GM12878 (cell line): ENCODE measurements at regions of chr6 and their contacts with region 1.

Region 1: GRCh38 chr6:152184917-152185574 is 377.6 kb downstream of the ESR1 start:
- DNase-seq: peak; percentile 32
- ATAC-seq: peak; percentile 83
- H3K4me3 ChIP-seq: peak overlapping the region; percentile 38; the same call in 1 of the 2 replicates
- H3K27ac ChIP-seq: peak overlapping the region; percentile 55
- H3K4me1 ChIP-seq: peaks cover 6% of the 10 kb centered on the region
- H3K27me3 ChIP-seq: no peaks in the 10 kb centered on the region
- CTCF ChIP-seq: no peak
- EP300 ChIP-seq: no peak
- POLR2A ChIP-seq: no peak
- RAD21 ChIP-seq: no peak

Region 2: DNA sequence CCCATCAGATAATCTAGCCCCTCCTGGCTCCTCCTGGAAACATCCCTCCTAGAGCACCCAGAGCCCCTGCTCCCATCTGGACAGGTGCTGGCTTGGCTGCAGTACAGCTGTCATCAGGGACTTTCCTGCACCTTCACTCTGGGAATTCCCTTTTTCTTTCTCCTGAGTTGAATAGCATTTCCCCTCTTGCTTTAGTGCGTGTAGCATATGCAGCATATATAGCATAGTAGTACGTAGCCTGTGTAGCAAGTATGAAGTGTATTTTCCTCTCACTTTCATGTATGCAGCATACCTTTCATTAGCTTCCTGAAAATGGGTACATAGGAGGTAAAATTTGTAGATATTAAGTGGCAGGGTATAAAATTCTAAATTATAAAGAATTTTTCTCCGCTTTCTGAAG is 24.7 kb before region 1 on chr6:
- CTCF ChIA-PET with region 1: interaction called, 3 read pairs
- POLR2A ChIA-PET with region 1: no interaction called
- RAD21 ChIA-PET with region 1: interaction called, 7 read pairs
- SMC1A ChIA-PET with region 1: interaction called, 18 read pairs
- in situ Hi-C with region 1: no loop called
- intact Hi-C with region 1: no loop called
- DNase-seq: peak; percentile 69
- ATAC-seq: peak; percentile 96
- H3K4me3 ChIP-seq: no peak overlapping the region
- H3K27ac ChIP-seq: no peak overlapping the region
- H3K4me1 ChIP-seq: peaks cover 7% of the 10 kb centered on the region; the same call in 1 of the 2 replicates
- H3K27me3 ChIP-seq: no peaks in the 10 kb centered on the region
- CTCF ChIP-seq: no peak
- EP300 ChIP-seq: peak; percentile 70 to 83; a peak in 2 of 4 replicates
- POLR2A ChIP-seq: no peak
- RAD21 ChIP-seq: no peak

Region 3: GRCh38 chr6:152170705-152171667 is 14.1 kb before region 1 on chr6:
- CTCF ChIA-PET with region 1: interaction called, 4 read pairs
- POLR2A ChIA-PET with region 1: interaction called, 3 read pairs
- RAD21 ChIA-PET with region 1: interaction called, 3 read pairs
- SMC1A ChIA-PET with region 1: interaction called, 11 read pairs
- in situ Hi-C with region 1: no loop called
- intact Hi-C with region 1: no loop called
- DNase-seq: peak; percentile 89
- ATAC-seq: peak; percentile 98
- H3K4me3 ChIP-seq: peak overlapping the region; percentile 39; the same call in 1 of the 2 replicates
- H3K27ac ChIP-seq: peak overlapping the region; percentile 80
- H3K4me1 ChIP-seq: peaks cover 13% of the 10 kb centered on the region; the same call in 1 of the 2 replicates
- H3K27me3 ChIP-seq: no peaks in the 10 kb centered on the region
- CTCF ChIP-seq: no peak
- EP300 ChIP-seq: peak; percentile 86 to 88
- POLR2A ChIP-seq: no peak
- RAD21 ChIP-seq: no peak

Region 4: DNA sequence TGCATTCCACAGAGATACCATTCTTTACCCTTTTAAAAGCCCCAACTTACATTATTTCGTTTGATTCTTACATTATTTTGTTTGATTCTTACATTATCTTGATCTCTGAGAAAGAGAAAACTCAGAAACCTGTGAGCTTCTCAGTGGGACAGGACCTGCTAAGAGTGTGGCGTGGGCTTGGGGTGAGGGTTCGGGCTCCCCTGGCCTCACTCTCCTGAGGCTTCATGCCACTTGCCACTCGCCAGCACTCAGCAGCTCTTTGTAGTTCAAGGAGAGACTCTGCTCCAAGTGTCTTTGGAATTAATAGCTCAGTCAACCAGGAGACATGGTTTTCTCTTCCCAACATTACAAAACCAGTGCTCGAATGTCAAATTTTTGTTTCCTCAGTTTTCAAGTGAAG is 1078.4 kb after region 1 on chr6:
- CTCF ChIA-PET with region 1: no interaction called
- POLR2A ChIA-PET with region 1: no interaction called
- RAD21 ChIA-PET with region 1: no interaction called
- SMC1A ChIA-PET with region 1: no interaction called
- in situ Hi-C with region 1: no loop called
- intact Hi-C with region 1: no loop called
- DNase-seq: no peak
- ATAC-seq: no peak
- H3K4me3 ChIP-seq: no peak overlapping the region
- H3K27ac ChIP-seq: no peak overlapping the region
- H3K4me1 ChIP-seq: no peaks in the 10 kb centered on the region
- H3K27me3 ChIP-seq: no peaks in the 10 kb centered on the region; a peak in 1 of 4 replicates
- CTCF ChIP-seq: no peak
- EP300 ChIP-seq: no peak
- POLR2A ChIP-seq: no peak
- RAD21 ChIP-seq: no peak